ENCODE measurements at regions of chr1 and their contacts with region 1.

Region 1: GRCh38 chr1:222897527-222898190 is 82.8 kb downstream of the DISP1 start:
- DNase-seq: no peak
- H3K4me3 Mint-ChIP-seq: peak overlapping the region; percentile 66
- H3K27ac Mint-ChIP-seq: peak overlapping the region; percentile 86
- H3K4me1 Mint-ChIP-seq: peaks cover 12% of the 10 kb centered on the region
- H3K27me3 Mint-ChIP-seq: no peaks in the 10 kb centered on the region

Region 2: DNA sequence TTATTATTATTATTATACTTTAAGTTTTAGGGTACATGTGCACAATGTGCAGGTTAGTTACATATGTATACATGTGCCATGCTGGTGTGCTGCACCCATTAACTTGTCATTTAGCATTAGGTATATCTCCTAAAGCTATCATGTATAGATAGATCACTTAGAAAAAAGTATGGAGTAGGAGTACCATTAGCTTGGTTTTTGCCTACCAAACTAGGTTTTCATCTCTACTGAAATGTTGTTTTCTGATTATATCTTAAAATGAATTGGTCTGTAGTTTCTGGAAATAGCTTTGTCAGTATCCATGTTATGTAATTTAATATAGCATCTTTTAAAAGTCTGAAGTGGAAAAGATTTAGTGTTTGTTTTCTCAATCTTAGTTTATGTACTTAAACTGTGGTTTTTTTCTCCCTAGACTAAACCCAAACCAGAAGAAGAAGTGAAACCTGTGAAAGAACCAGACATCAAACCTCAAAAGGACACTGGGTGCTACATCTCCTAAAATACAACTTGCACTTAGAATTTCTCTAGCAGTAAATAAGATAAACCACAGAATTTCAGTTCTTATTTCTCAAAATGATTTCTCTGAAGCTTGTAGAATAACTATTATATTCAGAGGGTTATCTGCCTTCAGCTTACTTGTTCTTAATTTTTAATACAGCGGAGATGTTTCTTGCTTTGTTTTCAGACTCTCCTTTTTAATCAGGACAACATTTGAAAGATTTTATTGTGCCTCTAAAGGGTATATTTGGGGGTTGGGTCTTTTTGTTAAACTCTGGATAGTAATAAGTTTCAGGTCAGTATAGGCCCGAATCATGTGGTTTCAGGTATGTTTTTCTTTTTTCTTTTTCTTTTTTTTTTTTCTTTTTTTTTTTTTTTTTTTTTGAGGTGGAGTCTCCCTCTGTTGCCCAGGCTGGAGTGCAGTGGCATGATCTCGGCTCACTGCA is 165.2 kb before region 1 on chr1:
- intact Hi-C with region 1: loop called (anchors 1 kb)
- DNase-seq: no peak
- H3K4me3 Mint-ChIP-seq: no peak overlapping the region
- H3K27ac Mint-ChIP-seq: peak overlapping the region; percentile 35
- H3K4me1 Mint-ChIP-seq: peaks cover 17% of the 10 kb centered on the region
- H3K27me3 Mint-ChIP-seq: no peaks in the 10 kb centered on the region

Region 3: DNA sequence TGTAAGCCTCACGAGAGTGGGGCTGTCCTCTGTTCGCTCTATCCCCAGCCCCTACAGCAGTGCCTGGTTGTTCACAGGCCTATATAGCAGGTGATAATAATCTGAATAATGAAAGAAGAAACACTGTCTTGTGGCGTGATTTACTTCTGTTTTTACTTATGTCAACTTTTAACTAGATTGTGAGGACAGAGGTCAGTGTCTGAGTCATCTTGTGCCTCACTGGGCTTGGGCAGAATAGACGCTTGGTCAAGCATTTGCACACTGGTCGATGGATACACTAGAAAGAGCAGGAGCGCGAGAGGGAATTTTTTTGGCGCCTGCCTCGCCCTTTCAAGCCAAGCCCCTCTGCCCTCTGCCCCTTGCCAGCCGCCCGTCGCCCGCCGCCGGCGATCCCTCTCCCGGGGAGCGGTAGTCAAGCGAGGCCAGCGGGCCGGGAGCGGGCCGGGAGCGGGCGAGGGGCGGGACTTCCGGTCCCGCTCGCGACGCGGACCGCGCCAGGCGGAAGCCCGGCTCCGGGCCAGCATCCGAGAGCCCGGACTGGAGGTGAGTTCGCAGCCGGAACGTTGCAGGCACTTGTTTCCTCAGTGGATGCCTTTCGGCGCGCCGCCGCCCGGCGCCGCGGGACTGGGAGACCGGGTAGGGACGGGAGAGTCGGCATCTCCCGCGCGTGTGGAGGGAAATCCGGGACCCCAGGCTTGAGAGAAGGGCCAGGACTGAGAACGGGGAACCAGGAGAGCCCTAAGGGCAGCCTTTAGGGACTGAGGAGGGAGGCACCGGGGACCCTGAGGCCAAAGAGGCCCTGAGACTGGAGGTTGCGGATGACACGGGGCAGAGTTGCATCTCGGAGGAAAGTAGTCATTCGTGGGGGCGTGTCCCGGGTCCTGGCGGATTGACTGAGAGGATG is 82.9 kb before region 1 on chr1 and contains the start of gene DISP1:
- intact Hi-C with region 1: loop called (anchors 5 kb)
- DNase-seq: peak; percentile 91
- H3K4me3 Mint-ChIP-seq: peak within 1 kb of the TSS; percentile 95
- H3K27ac Mint-ChIP-seq: peak within 1 kb of the TSS; percentile 95
- H3K4me1 Mint-ChIP-seq: peaks cover 17% of the 10 kb centered on the region
- H3K27me3 Mint-ChIP-seq: peaks cover 9% of the 10 kb centered on the region
- total RNA-seq, gene DISP1: 1.3 and 2.0 TPM in 2 replicates

Region 4: DNA sequence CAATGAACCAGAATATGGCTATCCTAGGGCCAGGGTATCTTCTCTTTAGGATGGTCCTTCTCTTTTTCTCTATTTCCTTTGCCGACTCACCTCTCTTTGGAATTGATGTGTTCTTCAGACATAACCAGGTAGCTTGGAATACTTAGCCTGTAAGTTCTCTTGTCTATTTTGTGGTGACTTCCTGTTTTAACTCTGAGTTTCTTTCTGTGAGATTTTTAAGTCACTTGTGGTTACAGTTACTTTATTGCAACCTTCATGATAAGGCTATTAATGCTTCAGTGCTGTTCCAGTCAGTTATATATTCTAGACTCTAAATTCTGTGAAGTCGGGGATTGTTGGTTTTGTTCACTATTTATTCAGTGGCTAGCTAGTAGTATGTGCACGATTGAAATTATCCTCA is 36.6 kb before region 1 on chr1:
- intact Hi-C with region 1: no loop called
- DNase-seq: no peak
- H3K4me3 Mint-ChIP-seq: no peak overlapping the region
- H3K27ac Mint-ChIP-seq: no peak overlapping the region
- H3K4me1 Mint-ChIP-seq: peaks cover 3% of the 10 kb centered on the region
- H3K27me3 Mint-ChIP-seq: no peaks in the 10 kb centered on the region

Region 5: DNA sequence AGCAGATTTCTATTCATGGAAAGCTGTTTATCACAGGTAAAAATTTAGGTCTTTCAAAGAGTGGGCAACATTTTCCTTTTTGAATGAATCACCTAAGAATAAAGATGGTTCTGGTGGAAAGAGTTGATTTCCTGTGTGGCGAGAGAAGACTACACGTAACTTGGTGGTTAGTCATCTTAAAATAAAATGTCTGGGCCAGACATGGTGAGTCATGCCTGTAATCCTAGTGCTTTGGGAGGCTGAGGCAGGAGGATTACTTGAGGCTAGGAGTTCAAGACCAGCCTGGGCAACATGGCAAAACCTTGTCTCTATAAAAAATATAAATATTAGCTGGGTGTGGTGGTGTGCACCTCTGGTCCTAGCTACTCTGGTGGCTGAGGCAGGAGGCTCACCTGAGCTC is 17.1 kb before region 1 on chr1:
- intact Hi-C with region 1: loop called (anchors 1 kb)
- DNase-seq: no peak
- H3K4me3 Mint-ChIP-seq: no peak overlapping the region
- H3K27ac Mint-ChIP-seq: peak overlapping the region; percentile 29
- H3K4me1 Mint-ChIP-seq: peaks cover 4% of the 10 kb centered on the region
- H3K27me3 Mint-ChIP-seq: no peaks in the 10 kb centered on the region

Region 6: GRCh38 chr1:222974496-222974895 is 76.8 kb after region 1 on chr1:
- intact Hi-C with region 1: no loop called
- DNase-seq: no peak
- H3K4me3 Mint-ChIP-seq: no peak overlapping the region
- H3K27ac Mint-ChIP-seq: no peak overlapping the region
- H3K4me1 Mint-ChIP-seq: no peaks in the 10 kb centered on the region
- H3K27me3 Mint-ChIP-seq: no peaks in the 10 kb centered on the region

Region 7: DNA sequence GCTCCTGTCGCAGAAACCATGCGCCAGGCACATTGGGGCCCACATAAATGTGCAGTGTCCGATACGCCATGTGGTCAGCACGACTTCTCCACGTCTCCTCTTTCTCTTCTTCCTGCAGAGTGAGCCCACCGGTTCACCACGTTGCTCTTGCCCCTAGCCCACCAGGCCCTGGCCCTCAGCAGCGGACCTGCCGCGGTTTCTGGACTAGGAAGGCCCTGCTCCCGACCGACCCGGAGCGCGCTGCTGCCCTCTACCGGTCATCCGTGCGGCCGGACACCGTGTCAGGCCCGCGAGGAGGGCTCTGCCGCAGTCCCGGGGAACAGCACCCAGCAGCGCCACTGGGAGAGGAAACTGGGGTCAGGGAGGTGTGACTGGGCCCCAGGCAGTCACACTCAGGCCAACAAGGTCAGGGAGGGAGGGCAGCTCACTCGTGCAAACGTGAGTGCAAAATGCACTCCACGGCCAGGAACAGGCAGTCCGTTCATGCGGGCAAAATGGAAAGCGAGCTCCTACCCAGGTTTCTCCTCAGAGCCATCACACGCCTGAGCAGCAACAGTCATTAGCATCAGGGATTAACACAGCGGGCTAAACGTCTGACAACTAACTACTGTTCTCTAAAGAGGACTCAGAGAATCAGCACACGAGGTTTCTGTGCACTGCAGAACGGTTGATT is 231.7 kb after region 1 on chr1:
- intact Hi-C with region 1: no loop called
- DNase-seq: peak; percentile 90
- H3K4me3 Mint-ChIP-seq: peak overlapping the region; percentile 59
- H3K27ac Mint-ChIP-seq: no peak overlapping the region
- H3K4me1 Mint-ChIP-seq: peaks cover 2% of the 10 kb centered on the region
- H3K27me3 Mint-ChIP-seq: peaks cover 29% of the 10 kb centered on the region

Measured in activated CD4-positive, alpha-beta T cell treated with anti-CD3 and anti-CD28 coated beads, Interleukin-2, amount 10 ng/mL, durations not matched to agents 24 days and 14 days (primary cell).